Posterior vena cava (tissue), 2 donors: ENCODE measurements at regions of chr6 and their contacts with region 1.

Region 1: GRCh38 chr6:84001119-84001518 is 32.5 kb upstream of the MRAP2 start:
- DNase-seq: no peak

Region 2: GRCh38 chr6:83853178-83854000 is 147.7 kb before region 1 on chr6 and contains the start of gene RIPPLY2:
- intact Hi-C with region 1: no loop called
- DNase-seq: peak; percentile 74
- total RNA-seq, gene RIPPLY2: not detected

Region 3: GRCh38 chr6:83952830-83953229 is 48.3 kb before region 1 on chr6:
- intact Hi-C with region 1: no loop called
- DNase-seq: no peak

Region 4: DNA sequence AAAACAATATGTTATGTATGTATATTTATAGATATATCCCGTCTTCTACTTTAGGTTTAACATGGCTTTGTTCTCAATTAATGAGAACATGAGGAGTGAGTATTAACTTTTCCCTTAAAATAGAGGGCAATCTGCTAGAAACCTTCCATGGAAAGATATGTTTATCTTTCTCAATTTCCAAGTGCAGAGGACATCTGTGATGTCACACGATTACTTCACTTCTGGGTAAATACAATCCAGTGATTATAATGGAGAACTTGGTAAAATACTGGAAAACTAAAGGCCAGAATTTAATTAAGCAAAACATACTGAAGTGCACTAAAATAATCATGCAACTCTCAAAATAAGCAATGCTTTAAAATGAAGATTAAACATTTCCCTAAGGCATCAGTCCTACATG is 20.5 kb after region 1 on chr6:
- intact Hi-C with region 1: loop called in 1 of 2 experiments (anchors 1 kb)
- DNase-seq: no peak

Region 5: DNA sequence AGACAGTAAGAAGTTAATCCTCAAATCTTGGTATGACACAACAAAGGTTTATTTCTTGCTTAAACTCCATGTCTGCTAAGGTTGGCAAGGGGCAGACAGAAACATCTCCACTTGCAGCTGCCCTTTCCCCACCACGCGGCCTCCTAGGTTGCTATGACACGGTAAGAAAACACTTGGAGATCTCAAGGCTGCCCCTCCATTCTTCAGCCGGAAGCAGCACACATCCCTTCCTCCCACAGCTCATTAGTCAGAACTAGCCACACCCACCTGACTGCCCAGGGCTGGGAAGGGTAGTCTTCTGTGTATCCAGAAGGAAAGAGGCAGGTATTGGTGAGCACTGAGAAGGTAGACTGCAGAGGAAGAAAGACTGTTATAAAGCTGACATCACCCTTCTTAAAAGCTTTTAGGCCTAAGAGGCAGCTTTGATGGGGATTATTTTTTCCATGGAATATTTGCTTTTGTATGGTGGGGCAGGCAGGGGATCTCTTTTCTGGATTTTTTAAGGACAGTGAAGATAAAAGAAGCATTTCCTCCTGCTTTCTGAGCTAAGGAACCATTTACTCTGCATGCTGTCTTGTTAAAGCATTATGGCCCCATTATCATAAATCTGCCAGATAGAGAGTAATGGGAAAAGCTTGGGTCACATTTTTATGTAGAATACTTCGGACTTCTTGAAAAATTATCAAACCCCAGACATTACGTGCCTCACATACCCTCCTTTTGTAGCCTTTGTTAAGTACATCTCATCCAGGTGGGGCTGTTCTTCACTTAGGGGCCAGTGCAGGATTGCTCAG is 74.1 kb after region 1 on chr6:
- intact Hi-C with region 1: no loop called
- DNase-seq: no peak